Activated T-helper 1 cell treated with anti-CD3 and anti-CD28 coated beads, Interleukin-12 subunit alpha, Interleukin-12 subunit beta, Interleukin-2, Interleukin-4 antibody, amounts not matched to agents 30 ng/mL and 10 ng/mL and 1 ng/mL, durations not matched to agents 14 hours and 24 hours and 36 hours (primary cell): ENCODE measurements at regions of chr3 and their contacts with region 1.

Region 1: DNA sequence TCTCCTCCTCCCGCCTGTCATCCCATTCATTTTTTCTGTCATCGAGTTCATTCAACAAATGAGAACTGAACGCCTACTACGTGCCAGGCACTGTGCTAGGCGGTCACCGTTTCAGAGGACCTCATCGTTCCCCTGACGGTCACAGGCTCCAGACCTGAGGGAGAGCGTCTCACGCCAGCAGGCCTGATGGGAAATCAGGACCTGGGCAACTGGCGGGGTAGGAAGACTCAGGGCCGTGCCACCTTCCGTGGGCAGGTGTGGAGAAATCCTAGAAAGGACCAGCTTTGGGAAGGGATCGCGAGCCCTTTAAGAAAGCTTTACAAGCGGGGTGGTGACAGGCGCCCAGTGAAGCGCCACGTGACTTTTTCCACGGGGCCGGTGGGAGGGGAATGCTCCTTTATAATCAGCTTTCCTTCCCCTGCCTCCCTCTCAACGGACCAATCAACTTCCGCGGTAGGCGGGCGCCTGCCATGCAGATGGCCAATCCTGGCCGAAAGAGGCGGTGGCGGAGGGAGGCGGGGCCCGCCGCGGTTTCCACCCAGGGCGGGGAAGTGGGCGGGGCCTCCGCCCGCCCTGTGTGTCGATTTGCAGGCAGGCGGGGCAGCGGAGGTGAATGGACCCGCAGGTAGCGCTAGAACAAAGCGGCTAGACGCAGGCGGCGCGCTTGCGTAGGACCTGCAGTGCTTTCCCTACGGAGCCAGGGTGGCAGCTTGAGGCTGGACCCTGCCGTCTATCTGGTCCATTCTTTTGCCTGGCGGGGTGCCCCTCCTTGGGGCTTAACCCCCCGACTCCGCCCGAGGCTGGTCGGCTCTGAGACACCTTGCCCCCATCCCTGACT is 816 bp upstream of the DUSP7 start:
- DNase-seq: peak; percentile 99
- H3K4me3 Mint-ChIP-seq: peak overlapping the region; percentile 91
- H3K27ac Mint-ChIP-seq: peak overlapping the region; percentile 94
- H3K4me1 Mint-ChIP-seq: peaks cover 31% of the 10 kb centered on the region
- H3K27me3 Mint-ChIP-seq: peaks cover 2% of the 10 kb centered on the region

Region 2: GRCh38 chr3:50568947-50569749 is 1488.0 kb before region 1 on chr3 and contains the start of gene HEMK1:
- intact Hi-C with region 1: loop called (anchors 10 kb)
- DNase-seq: peak; percentile 92
- H3K4me3 Mint-ChIP-seq: peak within 1 kb of the TSS; percentile 97
- H3K27ac Mint-ChIP-seq: peak within 1 kb of the TSS; percentile 97
- H3K4me1 Mint-ChIP-seq: peaks cover 78% of the 10 kb centered on the region
- H3K27me3 Mint-ChIP-seq: no peaks in the 10 kb centered on the region
- total RNA-seq, gene HEMK1: 54.1 and 58.0 TPM in 2 replicates

Region 3: GRCh38 chr3:51429138-51429537 is 628.0 kb before region 1 on chr3:
- intact Hi-C with region 1: no loop called
- DNase-seq: no peak
- H3K4me3 Mint-ChIP-seq: no peak overlapping the region
- H3K27ac Mint-ChIP-seq: no peak overlapping the region
- H3K4me1 Mint-ChIP-seq: no peaks in the 10 kb centered on the region
- H3K27me3 Mint-ChIP-seq: no peaks in the 10 kb centered on the region

Region 4: DNA sequence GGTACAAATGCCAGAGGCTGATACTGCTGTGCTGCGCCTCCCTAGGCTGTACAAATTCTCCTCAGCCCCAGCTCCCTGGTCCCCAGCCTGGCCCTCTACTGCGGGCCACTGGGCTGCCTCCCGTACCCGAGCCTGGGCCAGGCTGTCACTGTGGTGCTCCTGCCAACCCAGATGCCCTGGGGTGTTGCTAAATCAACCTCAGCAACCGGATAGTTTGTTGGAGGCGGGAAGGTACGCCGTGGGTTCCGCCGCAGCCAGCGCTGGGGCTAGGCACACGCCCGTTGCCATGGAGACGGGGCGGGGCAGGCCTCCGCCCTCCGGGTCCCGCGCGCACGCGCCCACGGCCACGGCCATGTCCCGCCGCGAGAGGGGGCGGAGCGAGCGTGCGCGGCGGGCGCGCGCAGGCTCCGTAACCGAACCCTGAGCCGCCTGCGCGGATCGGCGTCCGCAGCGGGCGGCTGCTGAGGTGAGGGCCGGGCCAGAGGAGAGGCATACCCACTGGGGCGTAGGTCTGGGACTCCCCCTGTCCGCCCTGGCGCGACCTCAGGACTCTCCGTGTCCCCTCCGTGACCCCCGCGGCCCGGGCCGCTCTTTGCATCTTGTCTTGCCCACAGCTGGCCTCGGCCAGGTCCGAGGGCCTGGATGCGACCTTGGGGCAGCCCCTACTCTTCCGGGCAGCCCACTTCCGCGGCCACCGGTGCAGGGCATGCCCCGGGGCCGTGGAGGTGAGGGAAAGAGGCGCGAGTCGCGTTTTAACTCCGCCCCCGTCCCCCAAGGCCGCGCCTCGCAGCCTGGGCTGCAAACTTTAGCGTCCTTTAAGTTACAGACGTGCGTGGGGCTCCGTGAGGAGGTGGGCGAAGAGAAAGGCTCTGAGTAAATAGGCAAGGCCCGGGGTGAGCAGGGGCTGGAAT is 386.1 kb before region 1 on chr3 and contains the start of gene TEX264:
- intact Hi-C with region 1: loop called (anchors 5 kb)
- DNase-seq: peak; percentile 95
- H3K4me3 Mint-ChIP-seq: peak within 1 kb of the TSS; percentile 86
- H3K27ac Mint-ChIP-seq: peak within 1 kb of the TSS; percentile 87
- H3K4me1 Mint-ChIP-seq: peaks cover 65% of the 10 kb centered on the region
- H3K27me3 Mint-ChIP-seq: no peaks in the 10 kb centered on the region
- total RNA-seq, gene TEX264: 50.3 and 52.0 TPM in 2 replicates

Region 5: DNA sequence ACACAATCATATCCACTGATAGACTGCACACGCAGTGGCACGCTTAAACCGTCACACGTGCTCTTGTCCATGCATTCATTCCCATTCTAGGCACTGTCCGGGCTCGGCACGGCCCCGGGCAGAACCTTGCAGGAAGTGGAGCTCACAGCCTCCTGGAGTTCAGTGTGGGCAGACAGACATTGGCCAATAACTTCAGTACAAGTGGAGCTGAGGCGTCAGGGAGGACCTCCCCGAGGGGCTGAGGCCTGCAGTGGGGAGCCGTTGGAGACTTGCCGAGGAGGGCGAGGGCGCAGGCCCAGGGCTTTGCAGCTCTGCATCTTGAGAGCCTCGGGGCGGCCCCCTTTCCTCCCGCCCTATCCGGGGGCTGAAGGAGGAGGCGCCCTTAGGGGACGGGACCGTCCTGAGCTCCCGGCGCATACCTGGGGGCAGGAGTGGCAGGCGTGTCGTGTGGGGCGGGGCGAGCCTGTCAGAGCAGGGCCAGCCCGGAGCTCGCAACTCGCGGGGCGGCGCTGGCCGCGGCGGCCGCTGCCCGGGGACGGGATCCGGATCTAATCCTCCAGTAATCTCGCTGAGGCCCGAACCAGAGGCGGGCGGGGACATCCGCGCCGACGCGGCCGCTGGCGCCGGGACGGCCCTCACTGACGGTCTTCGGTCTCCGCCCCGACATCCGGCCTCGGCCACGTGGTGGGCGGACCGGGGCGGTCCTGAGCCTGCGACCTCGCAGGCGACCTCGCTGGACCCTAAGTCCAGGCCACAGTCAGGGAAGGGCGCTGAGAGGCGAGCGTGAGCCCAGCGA is 74.2 kb before region 1 on chr3 and contains the start of gene ACY1:
- intact Hi-C with region 1: loop called (anchors 1 kb)
- DNase-seq: peak; percentile 79
- H3K4me3 Mint-ChIP-seq: peak within 1 kb of the TSS; percentile 97
- H3K27ac Mint-ChIP-seq: peak within 1 kb of the TSS; percentile 97
- H3K4me1 Mint-ChIP-seq: peaks cover 30% of the 10 kb centered on the region
- H3K27me3 Mint-ChIP-seq: no peaks in the 10 kb centered on the region
- total RNA-seq, gene ACY1: 58.0 and 58.5 TPM in 2 replicates

Region 6: DNA sequence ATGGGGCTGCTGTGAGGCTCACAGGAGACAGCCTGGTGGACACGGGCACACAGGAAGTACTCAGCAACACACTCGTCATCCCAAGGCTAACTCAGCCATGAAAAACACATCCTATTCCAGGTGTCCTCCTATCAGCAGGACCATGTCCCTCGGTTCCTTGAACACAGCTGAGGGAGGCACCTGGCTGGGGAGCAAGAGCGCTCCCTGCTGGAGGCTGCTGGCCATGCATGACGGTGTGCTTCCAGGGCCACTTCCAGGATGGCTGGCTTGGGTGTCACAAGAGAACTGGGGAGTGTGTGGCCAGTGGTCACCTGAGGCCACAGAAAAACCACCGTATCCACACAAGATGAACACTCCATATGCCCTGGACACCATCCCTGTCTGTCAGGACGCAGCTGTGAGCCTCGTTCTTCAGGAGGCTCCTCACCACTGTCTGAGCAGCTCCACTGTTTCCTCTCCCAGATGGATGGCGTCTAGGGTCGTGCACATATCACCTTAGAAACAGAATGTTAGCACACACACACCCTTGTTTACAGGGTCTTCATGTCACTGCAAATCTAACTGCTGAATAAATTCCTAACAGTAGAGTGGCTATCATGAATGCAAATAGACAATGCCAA is 66.0 kb after region 1 on chr3:
- intact Hi-C with region 1: loop called (anchors 1 kb)
- DNase-seq: peak; percentile 65
- H3K4me3 Mint-ChIP-seq: no peak overlapping the region
- H3K27ac Mint-ChIP-seq: no peak overlapping the region
- H3K4me1 Mint-ChIP-seq: peaks cover 34% of the 10 kb centered on the region
- H3K27me3 Mint-ChIP-seq: no peaks in the 10 kb centered on the region

Region 7: DNA sequence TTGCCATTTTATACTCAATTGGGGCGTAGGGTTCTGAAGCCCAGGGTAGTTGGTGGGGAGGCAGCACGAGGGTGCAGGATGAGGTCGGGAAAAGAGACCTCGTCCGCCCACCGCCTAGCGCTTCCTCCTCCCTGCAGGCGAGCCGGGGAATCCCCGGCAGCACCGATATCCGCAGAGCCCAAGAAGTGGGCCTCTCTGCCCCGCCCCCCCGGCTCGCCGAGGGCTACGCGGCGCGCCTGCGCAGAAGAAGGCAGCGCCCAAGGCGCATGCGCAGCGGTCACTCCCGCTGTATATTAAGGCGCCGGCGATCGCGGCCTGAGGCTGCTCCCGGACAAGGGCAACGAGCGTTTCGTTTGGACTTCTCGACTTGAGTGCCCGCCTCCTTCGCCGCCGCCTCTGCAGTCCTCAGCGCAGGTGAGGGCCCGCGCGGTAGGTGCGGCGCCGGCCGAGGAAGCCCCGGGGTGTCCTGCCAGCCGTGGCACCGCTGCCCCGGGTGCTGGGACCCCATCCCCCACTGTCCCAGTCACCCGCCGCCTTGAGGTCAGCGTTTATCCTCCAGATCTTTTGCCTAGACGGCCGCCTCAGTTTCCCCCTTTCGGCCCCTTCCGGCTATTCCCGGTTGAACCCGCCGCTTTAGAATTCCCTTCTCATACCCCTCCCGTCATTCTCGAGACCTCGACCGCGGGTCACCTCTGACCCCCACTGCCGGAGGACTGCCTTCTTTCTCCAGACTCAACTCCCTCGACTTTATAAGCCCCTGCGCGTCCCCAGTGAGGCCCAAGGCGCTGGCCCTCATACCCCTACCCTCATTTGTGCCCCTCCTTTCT is 140.9 kb after region 1 on chr3 and contains the start of gene ALAS1:
- intact Hi-C with region 1: loop called (anchors 1 kb)
- DNase-seq: peak; percentile 96
- H3K4me3 Mint-ChIP-seq: peak within 1 kb of the TSS; percentile 100
- H3K27ac Mint-ChIP-seq: peak within 1 kb of the TSS; percentile 94
- H3K4me1 Mint-ChIP-seq: peaks cover 63% of the 10 kb centered on the region
- H3K27me3 Mint-ChIP-seq: peaks cover 2% of the 10 kb centered on the region
- total RNA-seq, gene ALAS1: 105 and 110 TPM in 2 replicates

Region 8: GRCh38 chr3:52536369-52537164 is 479.4 kb after region 1 on chr3 and contains the start of gene UQCC5:
- intact Hi-C with region 1: loop called (anchors 2 kb)
- DNase-seq: peak; percentile 98
- H3K4me3 Mint-ChIP-seq: peak within 1 kb of the TSS; percentile 100
- H3K27ac Mint-ChIP-seq: peak within 1 kb of the TSS; percentile 99
- H3K4me1 Mint-ChIP-seq: peaks cover 42% of the 10 kb centered on the region
- H3K27me3 Mint-ChIP-seq: no peaks in the 10 kb centered on the region
- total RNA-seq, gene UQCC5: 14.1 and 17.1 TPM in 2 replicates